ENCODE measurements at regions of chr16 and their contacts with region 1.

Region 1: GRCh38 chr16:2071454-2072202 is 23.8 kb downstream of the TSC2 start:
- DNase-seq: no peak
- ATAC-seq: no peak
- H3K4me3 ChIP-seq: no peak overlapping the region
- H3K4me3 Mint-ChIP-seq: no peak overlapping the region
- H3K27ac ChIP-seq: no peak overlapping the region
- H3K27ac Mint-ChIP-seq: no peak overlapping the region
- H3K4me1 ChIP-seq: no peaks in the 10 kb centered on the region
- H3K4me1 Mint-ChIP-seq: no peaks in the 10 kb centered on the region
- H3K27me3 ChIP-seq: no peaks in the 10 kb centered on the region
- H3K27me3 Mint-ChIP-seq: no peaks in the 10 kb centered on the region
- CTCF ChIP-seq: no peak

Region 2: GRCh38 chr16:1983544-1984346 is 87.9 kb before region 1 on chr16 and contains the start of gene GFER:
- CTCF ChIA-PET with region 1: no interaction called
- POLR2A ChIA-PET with region 1: no interaction called
- intact Hi-C with region 1: no loop called
- DNase-seq: peak; percentile 29 to 84 (median 57)
- ATAC-seq: peak; percentile 79
- H3K4me3 ChIP-seq: peak within 1 kb of the TSS; percentile 60 to 71
- H3K4me3 Mint-ChIP-seq: peak within 1 kb of the TSS; percentile 82
- H3K27ac ChIP-seq: peak within 1 kb of the TSS; percentile 48 to 64
- H3K27ac Mint-ChIP-seq: peak within 1 kb of the TSS; percentile 66
- H3K4me1 ChIP-seq: peaks cover 15% of the 10 kb centered on the region
- H3K4me1 Mint-ChIP-seq: peaks cover 16% of the 10 kb centered on the region
- H3K27me3 ChIP-seq: peaks cover 12 to 30% of the 10 kb centered on the region in 2 experiments
- H3K27me3 Mint-ChIP-seq: peaks cover 22% of the 10 kb centered on the region
- CTCF ChIP-seq: no peak
- total RNA-seq, gene GFER: 15.6 to 16.1 TPM

Region 3: GRCh38 chr16:2039274-2040031 is 32.2 kb before region 1 on chr16:
- CTCF ChIA-PET with region 1: no interaction called
- POLR2A ChIA-PET with region 1: no interaction called
- intact Hi-C with region 1: loop called in 1 of 2 experiments (anchors 2 kb)
- DNase-seq: no peak
- ATAC-seq: no peak
- H3K4me3 ChIP-seq: no peak overlapping the region
- H3K4me3 Mint-ChIP-seq: no peak overlapping the region
- H3K27ac ChIP-seq: no peak overlapping the region
- H3K27ac Mint-ChIP-seq: no peak overlapping the region
- H3K4me1 ChIP-seq: no peaks in the 10 kb centered on the region
- H3K4me1 Mint-ChIP-seq: no peaks in the 10 kb centered on the region
- H3K27me3 ChIP-seq: no peaks in the 10 kb centered on the region
- H3K27me3 Mint-ChIP-seq: no peaks in the 10 kb centered on the region
- CTCF ChIP-seq: no peak

Region 4: GRCh38 chr16:2115591-2115973 is 44.0 kb after region 1 on chr16:
- CTCF ChIA-PET with region 1: no interaction called
- POLR2A ChIA-PET with region 1: no interaction called
- intact Hi-C with region 1: no loop called
- DNase-seq: no peak
- ATAC-seq: no peak
- H3K4me3 ChIP-seq: no peak overlapping the region
- H3K4me3 Mint-ChIP-seq: no peak overlapping the region
- H3K27ac ChIP-seq: no peak overlapping the region
- H3K27ac Mint-ChIP-seq: no peak overlapping the region
- H3K4me1 ChIP-seq: no peaks in the 10 kb centered on the region
- H3K4me1 Mint-ChIP-seq: no peaks in the 10 kb centered on the region
- H3K27me3 ChIP-seq: no peaks in the 10 kb centered on the region
- H3K27me3 Mint-ChIP-seq: no peaks in the 10 kb centered on the region
- CTCF ChIP-seq: no peak

Measured in CD8-positive, alpha-beta T cell (primary cell).